Mucosa of descending colon (tissue), 3 donors: ENCODE measurements at regions of chr10 and their contacts with region 1.

Region 1: GRCh38 chr10:63521416-63522276 is 445 bp downstream of the REEP3 start:
- DNase-seq: peak; percentile 63 to 80 (median 78)
- ATAC-seq: peak; percentile 84
- H3K4me3 ChIP-seq: peak overlapping the region; percentile 81
- H3K4me1 ChIP-seq: peaks cover 15% of the 10 kb centered on the region
- CTCF ChIP-seq: no peak

Region 2: DNA sequence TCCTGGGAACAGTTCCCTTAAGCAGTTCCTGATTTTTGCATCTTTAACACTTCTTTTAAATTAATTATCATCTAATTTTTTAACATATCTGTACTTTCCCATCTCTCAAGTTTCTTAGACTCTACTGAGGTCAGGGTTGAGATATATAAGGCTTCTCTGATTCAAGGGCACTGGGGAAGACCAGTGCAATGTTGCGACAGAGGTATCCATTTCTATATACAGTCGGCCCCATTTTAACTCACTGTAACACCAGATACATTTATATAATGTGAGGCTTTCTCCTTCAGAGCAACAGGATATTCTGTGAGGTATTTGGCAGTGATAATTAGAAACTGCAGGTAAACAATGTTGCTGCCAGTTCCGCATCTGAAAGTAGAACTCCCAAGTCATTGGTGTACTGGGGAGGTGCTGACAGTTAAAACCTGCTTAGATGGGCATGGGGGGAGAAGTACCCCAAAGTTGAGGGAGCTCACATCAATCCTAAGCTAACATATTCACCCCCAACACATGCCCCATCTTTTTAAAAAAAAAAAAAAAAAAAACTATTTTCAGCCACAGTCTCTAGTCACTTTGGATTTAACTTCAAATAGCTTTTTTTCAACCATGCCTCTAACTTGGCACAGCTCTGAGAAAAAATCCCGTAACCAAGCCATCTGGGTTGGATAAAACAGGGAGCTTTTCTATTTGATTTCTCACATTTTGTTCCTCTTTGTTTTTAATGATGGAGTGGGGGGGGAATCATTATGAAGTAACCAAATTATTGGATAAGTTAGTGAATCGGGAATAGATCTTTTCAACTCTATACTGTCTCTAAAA is 62.5 kb after region 1 on chr10:
- intact Hi-C with region 1: no loop called
- DNase-seq: no peak
- ATAC-seq: no peak
- H3K4me3 ChIP-seq: no peak overlapping the region
- H3K4me1 ChIP-seq: peaks cover 7% of the 10 kb centered on the region
- CTCF ChIP-seq: no peak

Region 3: DNA sequence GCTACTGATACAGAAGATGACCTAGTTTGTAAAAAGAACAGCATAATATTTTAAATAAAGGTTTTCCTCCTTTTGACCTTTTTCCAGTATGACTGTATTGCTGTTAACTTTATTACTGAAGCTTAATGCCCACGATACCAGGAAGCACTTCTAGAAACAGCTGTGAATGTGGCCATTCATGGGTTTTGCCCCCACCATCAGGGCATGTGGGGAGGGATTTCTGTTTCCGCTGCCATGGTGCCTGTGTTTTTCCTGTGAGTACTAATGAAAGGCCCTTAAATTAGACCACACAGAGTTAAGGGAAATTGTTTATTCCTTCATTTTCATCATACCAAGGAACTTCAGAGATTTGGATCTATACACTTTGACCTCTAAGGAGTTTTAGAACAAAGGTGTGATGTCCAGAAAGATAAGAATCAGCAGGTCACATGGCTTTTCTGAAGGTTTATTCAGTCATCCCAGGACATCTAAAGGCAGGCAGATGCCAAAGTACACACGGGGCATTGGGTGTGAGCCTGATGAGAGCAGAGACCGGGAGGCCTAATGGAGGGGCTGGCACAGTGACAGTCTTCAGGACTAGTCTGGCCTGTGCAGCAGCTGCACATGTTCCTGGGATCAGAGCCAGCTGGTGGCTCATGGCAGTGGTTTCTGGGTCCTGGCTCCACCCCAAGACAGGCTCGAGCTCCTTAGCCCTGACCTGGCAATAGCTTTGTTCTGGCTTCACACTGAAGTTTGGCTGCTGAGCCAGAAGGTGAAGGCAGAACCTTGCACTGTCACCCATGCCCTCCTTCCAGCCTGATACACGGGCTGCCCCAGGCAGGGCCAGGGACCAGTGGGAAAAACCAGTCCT is 190.4 kb after region 1 on chr10:
- intact Hi-C with region 1: loop called in 1 of 2 experiments (anchors 5 kb)
- DNase-seq: peak; percentile 92 to 97 (median 94)
- ATAC-seq: peak; percentile 95
- H3K4me3 ChIP-seq: no peak overlapping the region
- H3K4me1 ChIP-seq: peaks cover 31% of the 10 kb centered on the region
- CTCF ChIP-seq: no peak